CD4-positive, alpha-beta memory T cell (primary cell): ENCODE measurements at regions of chrX and their contacts with region 1.

Region 1: GRCh38 chrX:118847676-118848075 is 24.1 kb downstream of the ZCCHC12 start:
- DNase-seq: peak in 4 of 5 donors; percentile 45 to 51 (median 48)
- H3K4me3 ChIP-seq: no peak overlapping the region
- H3K4me3 Mint-ChIP-seq: no peak overlapping the region
- H3K27ac ChIP-seq: no peak overlapping the region
- H3K27ac Mint-ChIP-seq: no peak overlapping the region
- H3K4me1 ChIP-seq: no peaks in the 10 kb centered on the region
- H3K4me1 Mint-ChIP-seq: no peaks in the 10 kb centered on the region
- H3K27me3 ChIP-seq: no peaks in the 10 kb centered on the region
- H3K27me3 Mint-ChIP-seq: peaks cover 2% of the 10 kb centered on the region in 2 donors

Region 2: GRCh38 chrX:118802857-118803256 is 44.8 kb before region 1 on chrX:
- CTCF ChIA-PET with region 1: no interaction called
- POLR2A ChIA-PET with region 1: no interaction called
- intact Hi-C with region 1: no loop called
- DNase-seq: no peak
- H3K4me3 ChIP-seq: no peak overlapping the region
- H3K4me3 Mint-ChIP-seq: no peak overlapping the region
- H3K27ac ChIP-seq: no peak overlapping the region
- H3K27ac Mint-ChIP-seq: no peak overlapping the region
- H3K4me1 ChIP-seq: no peaks in the 10 kb centered on the region
- H3K4me1 Mint-ChIP-seq: no peaks in the 10 kb centered on the region
- H3K27me3 ChIP-seq: no peaks in the 10 kb centered on the region
- H3K27me3 Mint-ChIP-seq: peaks cover 4 to 6% of the 10 kb centered on the region in 2 donors

Region 3: DNA sequence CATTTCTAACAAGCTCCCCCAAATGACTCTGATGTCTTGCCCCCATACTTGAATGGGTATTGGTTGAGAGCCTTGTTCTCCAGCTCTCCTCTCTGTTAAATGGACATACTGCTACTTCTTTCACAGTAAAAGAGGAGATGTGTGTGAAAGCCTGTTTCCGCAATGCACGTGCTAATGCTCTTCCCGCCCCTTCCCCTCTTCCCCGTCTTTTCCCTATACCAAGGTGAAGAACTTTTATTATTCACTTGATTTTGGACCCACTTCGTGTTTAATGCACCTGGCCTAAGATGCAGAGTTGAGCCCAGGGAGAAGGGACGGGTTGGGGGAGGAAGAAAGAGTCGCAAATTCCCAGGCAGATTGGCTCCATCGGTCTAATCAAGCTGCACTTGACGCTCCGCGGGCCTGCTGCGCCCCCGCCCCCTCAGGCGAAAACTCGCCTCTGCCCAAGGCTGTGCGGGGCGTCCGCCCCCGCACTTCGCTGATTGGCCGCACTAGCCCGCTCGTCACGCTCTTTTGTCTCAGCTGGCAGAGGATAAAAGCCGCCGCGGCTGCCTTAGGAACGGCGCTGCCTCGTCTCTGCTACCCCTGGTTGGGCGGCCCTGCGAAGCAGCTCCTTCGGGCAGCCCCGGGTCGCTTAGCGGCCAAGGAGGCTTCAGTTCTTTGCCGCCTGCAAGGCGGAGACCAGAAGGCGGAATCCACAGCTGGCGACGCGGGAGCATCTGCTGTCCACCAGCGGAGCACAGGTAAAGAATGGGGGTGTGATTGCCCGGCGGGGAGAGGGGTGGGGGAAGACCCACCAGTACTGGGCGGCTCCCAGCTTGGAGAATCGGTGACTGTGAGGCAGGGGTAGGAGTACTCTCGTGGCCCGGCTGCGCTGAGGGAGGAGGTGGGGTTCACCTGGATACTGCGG is 24.2 kb before region 1 on chrX and contains the start of gene ZCCHC12:
- CTCF ChIA-PET with region 1: no interaction called
- POLR2A ChIA-PET with region 1: no interaction called
- intact Hi-C with region 1: no loop called
- DNase-seq: peak; percentile 23 to 55 (median 28)
- H3K4me3 ChIP-seq: no peak within 1 kb of the TSS
- H3K4me3 Mint-ChIP-seq: peak within 1 kb of the TSS; percentile 67 to 89 (median 81)
- H3K27ac ChIP-seq: no peak within 1 kb of the TSS
- H3K27ac Mint-ChIP-seq: peak within 1 kb of the TSS in 1 of 7 donors; percentile 52
- H3K4me1 ChIP-seq: peaks cover 17% of the 10 kb centered on the region
- H3K4me1 Mint-ChIP-seq: peaks cover 7 to 24% (median 14%) of the 10 kb centered on the region in 4 donors
- H3K27me3 ChIP-seq: peaks cover 11% of the 10 kb centered on the region
- H3K27me3 Mint-ChIP-seq: peaks cover 15 to 40% of the 10 kb centered on the region in 2 donors
- total RNA-seq, gene ZCCHC12: not detected

Region 4: GRCh38 chrX:119004920-119005524 is 157.3 kb after region 1 on chrX:
- CTCF ChIA-PET with region 1: interaction called, 31 read pairs
- POLR2A ChIA-PET with region 1: no interaction called
- intact Hi-C with region 1: loop called (anchors 1 kb)
- DNase-seq: peak; percentile 27 to 41 (median 39)
- H3K4me3 ChIP-seq: no peak overlapping the region
- H3K4me3 Mint-ChIP-seq: no peak overlapping the region
- H3K27ac ChIP-seq: no peak overlapping the region
- H3K27ac Mint-ChIP-seq: peak overlapping the region in 1 of 7 donors; percentile 57
- H3K4me1 ChIP-seq: no peaks in the 10 kb centered on the region
- H3K4me1 Mint-ChIP-seq: peaks cover 4 to 34% (median 21%) of the 10 kb centered on the region in 4 donors
- H3K27me3 ChIP-seq: no peaks in the 10 kb centered on the region
- H3K27me3 Mint-ChIP-seq: no peaks in the 10 kb centered on the region

Region 5: DNA sequence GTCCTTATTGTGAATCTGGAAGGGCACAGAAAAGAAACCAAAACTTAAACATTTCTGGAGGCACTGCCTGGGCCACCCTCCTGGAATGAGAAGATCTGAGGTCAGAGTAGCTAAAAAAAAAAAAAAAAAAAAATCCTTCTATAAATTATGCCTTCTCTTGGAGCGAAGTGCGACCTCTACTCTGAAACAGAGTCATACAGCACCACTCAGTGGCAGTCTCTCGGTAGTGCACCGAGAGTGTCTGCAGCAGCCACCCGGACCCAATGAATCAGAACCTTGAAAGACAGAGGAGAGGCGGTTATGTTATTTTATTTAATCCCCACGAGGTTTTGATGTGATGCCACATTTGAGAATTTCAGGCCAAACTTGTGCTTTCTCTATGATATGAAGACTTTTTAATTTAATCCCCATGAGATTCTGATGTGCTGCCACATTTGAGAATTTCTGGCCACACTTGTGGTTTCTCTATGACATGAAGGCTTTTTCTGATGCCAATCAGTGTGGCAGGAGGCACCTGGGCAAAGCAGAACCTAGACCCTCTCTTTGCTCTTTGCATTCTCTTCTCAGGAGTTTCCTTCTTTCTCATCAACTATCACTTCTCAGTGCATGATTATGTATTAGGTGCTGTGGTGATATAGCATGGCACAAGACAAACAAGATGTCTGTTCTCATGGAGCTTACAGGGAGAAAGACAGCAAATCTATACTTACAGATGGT is 219.5 kb after region 1 on chrX:
- CTCF ChIA-PET with region 1: interaction called, 26 read pairs
- POLR2A ChIA-PET with region 1: no interaction called
- intact Hi-C with region 1: loop called (anchors 1 kb)
- DNase-seq: peak in 3 of 5 donors; percentile 19 to 21 (median 20)
- H3K4me3 ChIP-seq: no peak overlapping the region
- H3K4me3 Mint-ChIP-seq: no peak overlapping the region
- H3K27ac ChIP-seq: no peak overlapping the region
- H3K27ac Mint-ChIP-seq: no peak overlapping the region
- H3K4me1 ChIP-seq: no peaks in the 10 kb centered on the region
- H3K4me1 Mint-ChIP-seq: no peaks in the 10 kb centered on the region
- H3K27me3 ChIP-seq: no peaks in the 10 kb centered on the region
- H3K27me3 Mint-ChIP-seq: no peaks in the 10 kb centered on the region

Region 6: GRCh38 chrX:119222932-119223331 is 375.3 kb after region 1 on chrX:
- CTCF ChIA-PET with region 1: no interaction called
- POLR2A ChIA-PET with region 1: no interaction called
- intact Hi-C with region 1: loop called (anchors 1 kb)
- DNase-seq: no peak
- H3K4me3 ChIP-seq: no peak overlapping the region
- H3K4me3 Mint-ChIP-seq: no peak overlapping the region
- H3K27ac ChIP-seq: no peak overlapping the region
- H3K27ac Mint-ChIP-seq: no peak overlapping the region
- H3K4me1 ChIP-seq: no peaks in the 10 kb centered on the region
- H3K4me1 Mint-ChIP-seq: peaks cover 0 to 1% (median 0%) of the 10 kb centered on the region in 4 donors
- H3K27me3 ChIP-seq: no peaks in the 10 kb centered on the region
- H3K27me3 Mint-ChIP-seq: peaks cover 10 to 14% of the 10 kb centered on the region in 2 donors

Region 7: GRCh38 chrX:119266364-119266995 is 418.8 kb after region 1 on chrX:
- CTCF ChIA-PET with region 1: no interaction called
- POLR2A ChIA-PET with region 1: no interaction called
- intact Hi-C with region 1: loop called (anchors 1 kb)
- DNase-seq: peak in 3 of 5 donors; percentile 11 to 24 (median 13)
- H3K4me3 ChIP-seq: no peak overlapping the region
- H3K4me3 Mint-ChIP-seq: no peak overlapping the region
- H3K27ac ChIP-seq: no peak overlapping the region
- H3K27ac Mint-ChIP-seq: no peak overlapping the region
- H3K4me1 ChIP-seq: no peaks in the 10 kb centered on the region
- H3K4me1 Mint-ChIP-seq: no peaks in the 10 kb centered on the region
- H3K27me3 ChIP-seq: no peaks in the 10 kb centered on the region
- H3K27me3 Mint-ChIP-seq: peaks cover 6 to 8% of the 10 kb centered on the region in 2 donors